CD8-positive, alpha-beta T cell (primary cell): ENCODE measurements at regions of chr17 and their contacts with region 1.

Region 1: GRCh38 chr17:68184816-68185436 is 62.9 kb upstream of the AMZ2 start:
- DNase-seq: peak in 7 of 9 experiments; percentile 46 to 89 (median 64)
- ATAC-seq: peak; percentile 70
- H3K4me3 ChIP-seq: peak overlapping the region; percentile 11 to 74
- H3K4me3 Mint-ChIP-seq: peak overlapping the region; percentile 68
- H3K27ac ChIP-seq: peak overlapping the region; percentile 5 to 92
- H3K27ac Mint-ChIP-seq: peak overlapping the region; percentile 86
- H3K4me1 ChIP-seq: peaks cover 56% of the 10 kb centered on the region
- H3K4me1 Mint-ChIP-seq: peaks cover 63% of the 10 kb centered on the region
- H3K27me3 ChIP-seq: no peaks in the 10 kb centered on the region
- H3K27me3 Mint-ChIP-seq: no peaks in the 10 kb centered on the region
- CTCF ChIP-seq: no peak

Region 2: GRCh38 chr17:68141050-68141449 is 43.9 kb before region 1 on chr17:
- CTCF ChIA-PET with region 1: no interaction called
- POLR2A ChIA-PET with region 1: no interaction called
- intact Hi-C with region 1: no loop called
- DNase-seq: no peak
- ATAC-seq: no peak
- H3K4me3 ChIP-seq: no peak overlapping the region
- H3K4me3 Mint-ChIP-seq: no peak overlapping the region
- H3K27ac ChIP-seq: no peak overlapping the region
- H3K27ac Mint-ChIP-seq: no peak overlapping the region
- H3K4me1 ChIP-seq: no peaks in the 10 kb centered on the region
- H3K4me1 Mint-ChIP-seq: no peaks in the 10 kb centered on the region
- H3K27me3 ChIP-seq: no peaks in the 10 kb centered on the region
- H3K27me3 Mint-ChIP-seq: no peaks in the 10 kb centered on the region
- CTCF ChIP-seq: no peak

Region 3: DNA sequence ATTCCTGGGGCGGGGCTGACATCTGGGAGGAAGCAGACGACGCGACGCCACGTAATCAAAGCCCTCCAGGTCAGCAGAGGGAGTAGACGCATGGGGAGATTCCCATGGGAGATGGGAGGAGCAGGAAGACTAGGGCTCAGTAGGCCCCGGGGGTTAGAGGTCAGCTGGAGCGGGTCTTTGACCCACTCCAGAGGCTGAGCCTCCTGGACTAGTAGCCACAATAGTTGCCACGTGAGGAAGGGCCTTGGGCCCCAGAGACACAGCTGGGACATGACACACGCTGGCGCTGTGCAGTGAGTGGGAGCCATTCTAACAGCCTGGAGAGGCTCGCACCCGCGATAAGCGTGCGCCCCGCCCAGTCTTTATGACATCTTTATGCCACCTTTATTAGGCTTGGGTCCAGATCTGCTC is 32.8 kb before region 1 on chr17:
- CTCF ChIA-PET with region 1: no interaction called
- POLR2A ChIA-PET with region 1: no interaction called
- intact Hi-C with region 1: no loop called
- DNase-seq: no peak
- ATAC-seq: no peak
- H3K4me3 ChIP-seq: no peak overlapping the region
- H3K4me3 Mint-ChIP-seq: no peak overlapping the region
- H3K27ac ChIP-seq: no peak overlapping the region
- H3K27ac Mint-ChIP-seq: no peak overlapping the region
- H3K4me1 ChIP-seq: no peaks in the 10 kb centered on the region
- H3K4me1 Mint-ChIP-seq: no peaks in the 10 kb centered on the region
- H3K27me3 ChIP-seq: no peaks in the 10 kb centered on the region
- H3K27me3 Mint-ChIP-seq: no peaks in the 10 kb centered on the region
- CTCF ChIP-seq: no peak

Region 4: GRCh38 chr17:68172461-68172954 is 12.4 kb before region 1 on chr17:
- CTCF ChIA-PET with region 1: interaction called, 50 read pairs
- POLR2A ChIA-PET with region 1: interaction called, 5 read pairs
- intact Hi-C with region 1: loop called in 1 of 2 experiments (anchors 1 kb)
- DNase-seq: peak; percentile 54 to 85 (median 80)
- ATAC-seq: peak; percentile 81
- H3K4me3 ChIP-seq: no peak overlapping the region
- H3K4me3 Mint-ChIP-seq: no peak overlapping the region
- H3K27ac ChIP-seq: no peak overlapping the region
- H3K27ac Mint-ChIP-seq: no peak overlapping the region
- H3K4me1 ChIP-seq: peaks cover 19% of the 10 kb centered on the region
- H3K4me1 Mint-ChIP-seq: peaks cover 37% of the 10 kb centered on the region
- H3K27me3 ChIP-seq: no peaks in the 10 kb centered on the region
- H3K27me3 Mint-ChIP-seq: no peaks in the 10 kb centered on the region
- CTCF ChIP-seq: peak; percentile 99

Region 5: DNA sequence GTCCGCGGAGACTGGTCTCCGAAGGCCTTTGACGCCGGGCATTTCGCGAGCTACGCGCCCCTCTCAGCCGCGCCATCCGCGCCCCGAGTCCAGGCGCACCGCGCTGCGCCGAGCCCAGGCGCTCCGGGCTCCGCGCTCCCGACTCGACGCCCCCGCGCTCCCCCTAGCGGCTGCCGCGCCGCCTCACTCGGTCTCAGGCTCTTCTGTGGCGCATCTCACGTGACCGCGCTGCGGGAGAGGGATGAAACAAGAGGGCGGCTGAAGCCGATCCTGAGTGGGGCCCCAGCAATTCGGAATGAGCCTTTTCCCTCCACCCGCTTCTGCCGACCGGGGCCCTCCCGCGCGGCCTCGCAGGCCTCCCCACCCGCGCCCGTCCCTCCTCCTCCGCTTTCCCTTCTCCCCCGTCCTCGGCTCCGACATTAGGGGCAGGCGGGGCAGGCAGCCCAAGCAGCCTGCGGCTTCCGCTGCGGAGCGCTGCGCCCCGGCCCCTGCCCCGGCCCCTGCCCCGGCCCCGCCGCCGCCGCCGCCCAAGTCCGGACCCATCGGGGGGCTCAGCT is 20.4 kb after region 1 on chr17:
- CTCF ChIA-PET with region 1: interaction called, 226 read pairs
- POLR2A ChIA-PET with region 1: interaction called, 115 read pairs
- intact Hi-C with region 1: loop called (anchors 1 kb)
- DNase-seq: peak; percentile 87 to 96 (median 93)
- ATAC-seq: peak; percentile 70
- H3K4me3 ChIP-seq: peak overlapping the region; percentile 68 to 78
- H3K4me3 Mint-ChIP-seq: peak overlapping the region; percentile 88
- H3K27ac ChIP-seq: peak overlapping the region; percentile 77 to 78
- H3K27ac Mint-ChIP-seq: peak overlapping the region; percentile 93
- H3K4me1 ChIP-seq: peaks cover 23% of the 10 kb centered on the region
- H3K4me1 Mint-ChIP-seq: peaks cover 37% of the 10 kb centered on the region
- H3K27me3 ChIP-seq: no peaks in the 10 kb centered on the region
- H3K27me3 Mint-ChIP-seq: no peaks in the 10 kb centered on the region
- CTCF ChIP-seq: peak; percentile 89

Region 6: GRCh38 chr17:68356520-68356919 is 171.6 kb after region 1 on chr17:
- CTCF ChIA-PET with region 1: no interaction called
- POLR2A ChIA-PET with region 1: no interaction called
- intact Hi-C with region 1: loop called in 1 of 2 experiments (anchors 5 kb)
- DNase-seq: peak; percentile 44 to 93 (median 69)
- ATAC-seq: peak; percentile 91
- H3K4me3 ChIP-seq: peak overlapping the region; percentile 7 to 12
- H3K4me3 Mint-ChIP-seq: peak overlapping the region; percentile 72
- H3K27ac ChIP-seq: peak overlapping the region; percentile 14 to 45
- H3K27ac Mint-ChIP-seq: peak overlapping the region; percentile 83
- H3K4me1 ChIP-seq: peaks cover 51% of the 10 kb centered on the region
- H3K4me1 Mint-ChIP-seq: peaks cover 57% of the 10 kb centered on the region
- H3K27me3 ChIP-seq: no peaks in the 10 kb centered on the region
- H3K27me3 Mint-ChIP-seq: no peaks in the 10 kb centered on the region
- CTCF ChIP-seq: no peak

Region 7: DNA sequence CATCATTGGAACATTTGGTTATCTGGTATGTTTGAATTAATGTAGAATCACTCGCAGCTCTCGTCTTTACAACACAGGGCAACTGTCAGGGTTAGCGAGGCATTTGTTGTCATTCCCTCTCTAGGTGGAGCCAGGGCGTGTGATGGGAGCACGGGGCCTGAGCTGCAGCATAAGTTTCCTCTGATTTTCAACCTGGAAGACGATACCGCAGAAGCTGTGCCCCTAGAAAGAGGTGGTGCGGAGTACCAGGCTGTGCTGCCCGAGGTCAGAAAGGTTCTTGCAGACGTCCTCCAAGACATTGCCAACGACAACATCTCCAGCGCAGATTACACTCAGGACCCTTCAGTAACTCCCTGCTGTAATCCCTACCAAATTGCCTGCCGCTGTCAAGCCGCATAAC is 235.1 kb after region 1 on chr17:
- CTCF ChIA-PET with region 1: no interaction called
- POLR2A ChIA-PET with region 1: no interaction called
- intact Hi-C with region 1: no loop called
- DNase-seq: no peak
- ATAC-seq: no peak
- H3K4me3 ChIP-seq: no peak overlapping the region
- H3K4me3 Mint-ChIP-seq: no peak overlapping the region
- H3K27ac ChIP-seq: no peak overlapping the region
- H3K27ac Mint-ChIP-seq: no peak overlapping the region
- H3K4me1 ChIP-seq: peaks cover 10% of the 10 kb centered on the region
- H3K4me1 Mint-ChIP-seq: peaks cover 17% of the 10 kb centered on the region
- H3K27me3 ChIP-seq: no peaks in the 10 kb centered on the region
- H3K27me3 Mint-ChIP-seq: no peaks in the 10 kb centered on the region
- CTCF ChIP-seq: no peak